ENCODE measurements at regions of chr6 and their contacts with region 1.

Region 1: GRCh38 chr6:150417899-150418826 is 49.4 kb downstream of the IYD start:
- DNase-seq: no peak
- H3K4me3 ChIP-seq: peak overlapping the region; percentile 53 to 66
- H3K27ac ChIP-seq: peak overlapping the region; percentile 35 to 37
- H3K4me1 ChIP-seq: no peaks in the 10 kb centered on the region
- H3K27me3 ChIP-seq: no peaks in the 10 kb centered on the region
- CTCF ChIP-seq: peak; percentile 73 to 79 (median 73)

Region 2: DNA sequence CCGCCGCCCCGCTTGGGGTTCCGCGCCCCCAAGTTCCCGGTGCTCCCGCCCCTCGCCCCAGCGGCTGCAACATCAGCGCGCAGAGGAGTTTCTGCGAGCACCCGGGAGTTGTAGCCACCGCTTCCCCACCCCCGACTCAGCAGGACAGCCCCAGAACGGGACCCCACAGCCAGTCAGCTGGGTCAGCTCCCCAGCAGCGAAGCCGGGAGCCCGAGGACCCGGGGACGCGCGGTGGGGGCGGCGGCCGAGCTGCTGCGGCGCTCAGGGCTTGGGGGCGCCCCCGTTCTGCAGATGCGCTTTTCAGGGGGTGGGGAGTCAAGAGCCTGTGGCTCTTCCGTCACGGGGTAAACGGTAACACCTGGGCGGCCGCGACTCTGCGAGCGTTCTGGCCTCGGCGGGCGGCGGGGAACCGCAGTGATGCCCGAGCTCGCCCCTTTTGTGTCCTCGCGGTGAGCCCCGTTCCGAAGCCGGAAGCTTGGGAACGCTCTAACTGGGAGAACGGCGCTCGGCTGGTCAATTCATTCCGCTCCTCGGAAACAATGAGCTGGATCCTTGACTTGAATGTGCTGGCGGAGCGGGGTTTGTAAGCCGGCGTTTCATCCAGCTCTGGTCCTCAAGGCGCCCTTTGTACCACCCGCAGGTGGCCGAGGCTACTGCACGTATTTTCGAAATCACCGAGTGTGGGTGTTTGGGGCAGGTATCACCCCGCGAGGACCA is 182.3 kb after region 1 on chr6:
- intact Hi-C with region 1: loop called (anchors 2 kb)
- DNase-seq: peak; percentile 39 to 88
- H3K4me3 ChIP-seq: peak overlapping the region; percentile 70 to 95
- H3K27ac ChIP-seq: peak overlapping the region; percentile 71 to 79
- H3K4me1 ChIP-seq: no peaks in the 10 kb centered on the region
- H3K27me3 ChIP-seq: no peaks in the 10 kb centered on the region
- CTCF ChIP-seq: peak; percentile 39 to 62 (median 52)

Region 3: GRCh38 chr6:150741633-150742504 is 323.7 kb after region 1 on chr6:
- intact Hi-C with region 1: loop called (anchors 5 kb)
- DNase-seq: no peak
- H3K4me3 ChIP-seq: no peak overlapping the region
- H3K27ac ChIP-seq: no peak overlapping the region
- H3K4me1 ChIP-seq: no peaks in the 10 kb centered on the region
- H3K27me3 ChIP-seq: no peaks in the 10 kb centered on the region
- CTCF ChIP-seq: peak; percentile 3 to 45 (median 12)

Region 4: DNA sequence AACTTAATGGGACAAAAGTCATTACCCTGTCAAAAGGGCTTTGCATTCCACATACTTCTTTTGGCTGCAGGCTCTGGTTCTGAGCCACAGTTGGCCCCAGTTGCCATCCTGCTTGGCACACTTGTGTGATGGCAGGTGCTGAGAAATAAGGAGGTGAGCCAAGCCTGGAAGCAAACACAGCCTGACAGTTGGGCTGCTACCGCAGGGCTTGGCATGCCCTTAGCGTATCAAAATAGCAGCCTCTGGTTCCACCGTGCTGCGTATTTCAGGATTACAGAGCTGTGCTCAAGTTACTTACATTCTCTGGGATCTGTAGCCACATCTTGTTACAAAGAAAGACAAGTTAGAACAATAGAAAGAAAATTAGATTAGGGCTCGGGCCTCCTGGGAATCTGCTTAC is 458.4 kb after region 1 on chr6:
- intact Hi-C with region 1: loop called (anchors 5 kb)
- DNase-seq: peak in 1 of 2 donors; percentile 89
- H3K4me3 ChIP-seq: no peak overlapping the region
- H3K27ac ChIP-seq: peak overlapping the region; percentile 73 to 79
- H3K4me1 ChIP-seq: peaks cover 7 to 39% of the 10 kb centered on the region in 2 donors
- H3K27me3 ChIP-seq: no peaks in the 10 kb centered on the region
- CTCF ChIP-seq: peak; percentile 31 to 56 (median 41)